Calu3 (cell line): ENCODE measurements at regions of chr16 and their contacts with region 1.

Region 1: DNA sequence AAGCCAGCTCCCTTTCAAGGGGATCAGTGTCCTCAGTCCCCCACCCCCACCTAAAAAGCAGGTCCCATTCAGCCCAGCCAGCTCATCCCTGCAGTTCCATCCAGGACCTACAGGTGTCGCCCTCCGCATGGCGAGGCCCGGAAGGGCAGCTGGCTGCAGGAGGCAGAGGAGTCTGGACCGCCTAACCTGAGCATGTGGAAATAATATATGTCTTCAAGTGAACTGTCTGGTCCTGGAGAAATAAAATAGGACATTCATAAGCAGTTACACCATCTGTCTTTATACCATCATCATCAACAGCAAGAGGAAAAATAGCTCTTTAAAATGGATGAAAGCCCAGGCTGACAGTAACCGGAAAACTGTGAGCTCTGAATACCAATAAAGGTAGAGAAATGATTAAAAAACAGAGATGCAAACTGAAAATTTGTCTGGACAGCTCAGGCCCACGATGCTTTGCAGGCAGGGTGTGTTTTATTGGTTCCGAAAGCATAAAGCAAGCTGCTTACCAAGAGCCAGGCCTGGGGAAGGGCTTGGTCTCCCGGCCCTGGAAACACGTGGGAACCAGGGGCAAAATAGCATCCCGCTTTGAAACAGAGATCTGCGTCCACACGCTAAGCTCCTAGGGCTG is 215.2 kb downstream of the ZFHX3 start:
- DNase-seq: peak; percentile 93
- H3K4me3 Mint-ChIP-seq: no peak overlapping the region
- H3K27ac Mint-ChIP-seq: no peak overlapping the region
- H3K4me1 Mint-ChIP-seq: no peaks in the 10 kb centered on the region
- H3K27me3 Mint-ChIP-seq: no peaks in the 10 kb centered on the region
- CTCF ChIP-seq: peak; percentile 95

Region 2: GRCh38 chr16:72877374-72878028 is 44.8 kb after region 1 on chr16:
- CTCF ChIA-PET with region 1: interaction called, 4 read pairs
- intact Hi-C with region 1: loop called (anchors 1 kb)
- DNase-seq: peak; percentile 64
- H3K4me3 Mint-ChIP-seq: no peak overlapping the region
- H3K27ac Mint-ChIP-seq: peak overlapping the region; percentile 77
- H3K4me1 Mint-ChIP-seq: peaks cover 29% of the 10 kb centered on the region
- H3K27me3 Mint-ChIP-seq: no peaks in the 10 kb centered on the region
- CTCF ChIP-seq: no peak

Region 3: GRCh38 chr16:72947379-72948237 is 114.9 kb after region 1 on chr16:
- CTCF ChIA-PET with region 1: no interaction called
- intact Hi-C with region 1: no loop called
- DNase-seq: no peak
- H3K4me3 Mint-ChIP-seq: no peak overlapping the region
- H3K27ac Mint-ChIP-seq: no peak overlapping the region
- H3K4me1 Mint-ChIP-seq: peaks cover 8% of the 10 kb centered on the region
- H3K27me3 Mint-ChIP-seq: no peaks in the 10 kb centered on the region
- CTCF ChIP-seq: no peak

Region 4: DNA sequence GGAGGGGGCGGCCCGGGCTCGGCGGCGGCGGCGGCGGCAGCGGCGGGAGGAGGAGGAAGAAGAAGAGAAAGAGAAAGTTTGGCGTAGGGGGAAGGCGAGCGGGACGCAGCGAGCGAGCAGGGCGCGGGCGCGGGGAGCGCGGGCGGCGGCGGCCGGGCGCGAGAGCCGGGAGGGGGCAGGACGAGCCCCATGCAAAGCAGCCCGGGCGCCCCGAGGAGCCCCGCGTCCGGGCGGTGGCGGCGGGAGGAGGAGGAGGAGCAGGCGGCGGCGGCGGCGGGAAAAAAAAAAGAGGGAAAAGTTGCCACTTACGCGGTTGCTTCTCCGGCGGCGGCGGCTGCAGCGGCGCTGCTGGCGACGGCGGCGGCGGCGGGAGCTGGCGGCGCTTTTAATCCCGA is 225.5 kb after region 1 on chr16:
- CTCF ChIA-PET with region 1: interaction called, 12 read pairs
- intact Hi-C with region 1: loop called (anchors 2 kb)
- DNase-seq: peak; percentile 64
- H3K4me3 Mint-ChIP-seq: no peak overlapping the region
- H3K27ac Mint-ChIP-seq: no peak overlapping the region
- H3K4me1 Mint-ChIP-seq: peaks cover 20% of the 10 kb centered on the region
- H3K27me3 Mint-ChIP-seq: peaks cover 20% of the 10 kb centered on the region
- CTCF ChIP-seq: no peak

Region 5: GRCh38 chr16:73196670-73197069 is 363.9 kb after region 1 on chr16:
- CTCF ChIA-PET with region 1: interaction called, 12 read pairs
- intact Hi-C with region 1: loop called (anchors 5 kb)
- DNase-seq: peak; percentile 75
- H3K4me3 Mint-ChIP-seq: no peak overlapping the region
- H3K27ac Mint-ChIP-seq: no peak overlapping the region
- H3K4me1 Mint-ChIP-seq: no peaks in the 10 kb centered on the region
- H3K27me3 Mint-ChIP-seq: peaks cover 17% of the 10 kb centered on the region
- CTCF ChIP-seq: peak; percentile 60